ENCODE measurements at regions of chr22 and their contacts with region 1.

Region 1: DNA sequence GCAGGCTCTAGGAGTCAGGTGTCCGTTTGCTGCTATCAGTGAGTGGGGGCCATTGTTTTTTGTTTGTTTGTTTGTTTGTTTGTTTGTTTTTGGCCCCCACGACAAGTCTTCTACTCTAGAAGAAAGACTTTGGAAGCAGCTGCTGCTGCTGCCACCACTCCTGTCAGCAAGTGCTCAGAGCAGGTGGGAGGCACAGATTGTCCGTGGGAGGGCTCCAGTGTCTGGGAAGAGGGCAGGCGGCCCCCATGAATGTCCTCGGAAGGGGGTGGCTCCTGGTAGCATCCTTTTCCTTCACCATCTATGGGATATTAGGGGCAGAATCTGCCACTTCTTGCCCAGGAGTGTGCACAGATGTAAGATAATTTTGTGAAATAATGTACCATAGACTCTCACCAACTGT is 37.8 kb upstream of the YWHAH start:
- DNase-seq: no peak
- ATAC-seq: no peak
- H3K4me3 ChIP-seq: no peak overlapping the region
- H3K27ac ChIP-seq: no peak overlapping the region
- H3K4me1 ChIP-seq: no peaks in the 10 kb centered on the region
- H3K27me3 ChIP-seq: no peaks in the 10 kb centered on the region

Region 2: DNA sequence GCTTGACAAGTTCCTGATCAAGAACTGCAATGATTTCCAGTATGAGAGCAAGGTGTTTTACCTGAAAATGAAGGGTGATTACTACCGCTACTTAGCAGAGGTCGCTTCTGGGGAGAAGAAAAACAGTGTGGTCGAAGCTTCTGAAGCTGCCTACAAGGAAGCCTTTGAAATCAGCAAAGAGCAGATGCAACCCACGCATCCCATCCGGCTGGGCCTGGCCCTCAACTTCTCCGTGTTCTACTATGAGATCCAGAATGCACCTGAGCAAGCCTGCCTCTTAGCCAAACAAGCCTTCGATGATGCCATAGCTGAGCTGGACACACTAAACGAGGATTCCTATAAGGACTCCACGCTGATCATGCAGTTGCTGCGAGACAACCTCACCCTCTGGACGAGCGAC is 49.8 kb after region 1 on chr22:
- intact Hi-C with region 1: loop called in 1 of 4 experiments (anchors 2 kb)
- DNase-seq: peak in 1 of 3 donors; percentile 26
- ATAC-seq: no peak
- H3K4me3 ChIP-seq: no peak overlapping the region
- H3K27ac ChIP-seq: no peak overlapping the region
- H3K4me1 ChIP-seq: peaks cover 6% of the 10 kb centered on the region
- H3K27me3 ChIP-seq: no peaks in the 10 kb centered on the region

Region 3: GRCh38 chr22:32080904-32081303 is 174.3 kb after region 1 on chr22:
- intact Hi-C with region 1: no loop called
- DNase-seq: no peak
- ATAC-seq: peak; percentile 35 to 49
- H3K4me3 ChIP-seq: no peak overlapping the region
- H3K27ac ChIP-seq: no peak overlapping the region
- H3K4me1 ChIP-seq: peaks cover 5% of the 10 kb centered on the region
- H3K27me3 ChIP-seq: no peaks in the 10 kb centered on the region